GM12878 (cell line): ENCODE measurements at regions of chr11 and their contacts with region 1.

Region 1: GRCh38 chr11:120335908-120336640 is at the start of gene ARHGEF12:
- DNase-seq: peak; percentile 33
- ATAC-seq: peak; percentile 64
- H3K4me3 ChIP-seq: peak within 1 kb of the TSS; percentile 94
- H3K27ac ChIP-seq: peak within 1 kb of the TSS; percentile 74
- H3K4me1 ChIP-seq: peaks cover 9% of the 10 kb centered on the region
- H3K27me3 ChIP-seq: no peaks in the 10 kb centered on the region
- CTCF ChIP-seq: peak; percentile 40 to 48 (median 44)
- EP300 ChIP-seq: peak in 1 of 2 experiments; percentile 43; a peak in 1 of 4 replicates
- POLR2A ChIP-seq: peak; percentile 67
- RAD21 ChIP-seq: peak; percentile 23; the same call in 1 of the 2 replicates
- polyA plus RNA-seq, gene ARHGEF12: 2.7 to 3.6 TPM

Region 2: DNA sequence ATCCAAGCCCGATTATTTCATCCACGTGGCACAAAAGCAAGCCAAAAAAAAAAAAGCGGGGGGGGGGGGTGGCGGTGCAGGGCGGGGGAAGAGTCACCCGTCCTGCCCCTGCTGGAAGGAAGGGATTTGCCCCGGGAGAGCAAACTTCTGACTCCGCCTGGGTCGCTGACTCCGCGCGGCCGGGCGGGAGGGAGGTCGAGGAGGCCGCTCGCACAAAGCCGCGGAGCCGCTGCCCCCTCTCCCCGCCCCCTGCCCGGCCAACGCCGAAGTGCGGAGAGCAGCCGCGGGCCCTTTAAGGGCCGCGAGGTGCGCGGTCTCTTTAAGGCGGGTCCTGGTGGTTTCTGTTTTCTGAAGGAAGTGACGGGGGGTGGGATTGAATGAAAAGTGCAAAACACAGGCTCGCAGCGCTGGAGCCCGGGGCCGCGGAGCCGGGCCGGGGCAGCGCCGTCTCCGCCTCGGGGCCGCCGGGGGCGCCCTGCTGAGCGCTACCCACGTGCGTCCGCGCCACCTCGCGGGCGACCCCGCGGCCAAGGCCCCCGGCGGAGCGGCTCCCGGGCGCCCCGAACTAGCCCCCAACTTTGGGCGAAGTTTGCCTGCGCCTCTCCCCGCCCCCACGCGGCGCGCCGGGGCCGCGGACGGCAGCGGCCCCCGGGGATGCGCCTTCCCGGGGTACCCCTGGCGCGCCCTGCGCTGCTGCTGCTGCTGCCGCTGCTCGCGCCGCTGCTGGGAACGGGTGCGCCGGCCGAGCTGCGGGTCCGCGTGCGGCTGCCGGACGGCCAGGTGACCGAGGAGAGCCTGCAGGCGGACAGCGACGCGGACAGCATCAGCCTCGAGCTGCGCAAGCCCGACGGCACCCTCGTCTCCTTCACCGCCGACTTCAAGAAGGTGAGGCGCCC is 125.2 kb before region 1 on chr11 and contains the start of gene OAF:
- CTCF ChIA-PET with region 1: no interaction called
- POLR2A ChIA-PET with region 1: no interaction called
- RAD21 ChIA-PET with region 1: no interaction called
- SMC1A ChIA-PET with region 1: no interaction called
- in situ Hi-C with region 1: no loop called
- intact Hi-C with region 1: no loop called
- DNase-seq: no peak
- ATAC-seq: peak; percentile 92
- H3K4me3 ChIP-seq: peak within 1 kb of the TSS; percentile 74
- H3K27ac ChIP-seq: no peak within 1 kb of the TSS; the same call in 1 of the 2 replicates
- H3K4me1 ChIP-seq: peaks cover 11% of the 10 kb centered on the region
- H3K27me3 ChIP-seq: peaks cover 0 to 1% of the 10 kb centered on the region in 2 experiments; a peak in 2 of 4 replicates
- CTCF ChIP-seq: peak in 1 of 3 experiments; percentile 28; a peak in 2 of 6 replicates
- EP300 ChIP-seq: no peak
- POLR2A ChIP-seq: no peak
- RAD21 ChIP-seq: no peak
- polyA plus RNA-seq, gene OAF: 0.10 to 0.22 TPM

Region 3: GRCh38 chr11:120400564-120401364 is 64.7 kb after region 1 on chr11:
- CTCF ChIA-PET with region 1: interaction called, 15 read pairs
- POLR2A ChIA-PET with region 1: interaction called, 9 read pairs
- RAD21 ChIA-PET with region 1: interaction called, 34 read pairs
- SMC1A ChIA-PET with region 1: interaction called, 37 read pairs
- in situ Hi-C with region 1: no loop called
- intact Hi-C with region 1: loop called (anchors 2 kb)
- DNase-seq: peak; percentile 51
- ATAC-seq: peak; percentile 88
- H3K4me3 ChIP-seq: peak overlapping the region; percentile 10; the same call in 1 of the 2 replicates
- H3K27ac ChIP-seq: peak overlapping the region; percentile 48
- H3K4me1 ChIP-seq: peaks cover 8% of the 10 kb centered on the region
- H3K27me3 ChIP-seq: no peaks in the 10 kb centered on the region
- CTCF ChIP-seq: no peak
- EP300 ChIP-seq: peak in 1 of 2 experiments; percentile 34; a peak in 2 of 4 replicates
- POLR2A ChIP-seq: no peak
- RAD21 ChIP-seq: no peak

Region 4: DNA sequence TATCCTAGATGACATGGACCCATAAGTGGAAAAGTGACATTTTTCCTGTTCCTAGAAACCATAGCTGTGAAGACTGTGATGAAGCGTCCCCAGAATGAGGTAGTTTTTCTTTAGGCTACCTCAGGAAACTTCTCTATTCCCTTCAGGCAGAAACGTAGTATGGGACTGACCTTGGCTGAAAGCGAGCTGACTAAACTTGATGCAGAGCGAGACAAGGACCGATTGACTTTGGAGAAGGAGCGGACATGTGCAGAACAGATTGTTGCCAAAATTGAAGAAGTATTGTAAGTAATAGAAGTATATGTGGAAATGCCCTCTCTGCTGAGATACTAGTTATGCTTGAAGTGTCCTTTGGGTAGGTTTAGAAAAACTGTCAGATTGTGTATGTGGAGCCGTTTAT is 110.7 kb after region 1 on chr11:
- CTCF ChIA-PET with region 1: interaction called, 7 read pairs
- POLR2A ChIA-PET with region 1: no interaction called
- RAD21 ChIA-PET with region 1: no interaction called
- SMC1A ChIA-PET with region 1: interaction called, 32 read pairs
- in situ Hi-C with region 1: no loop called
- intact Hi-C with region 1: no loop called
- DNase-seq: no peak
- ATAC-seq: no peak
- H3K4me3 ChIP-seq: no peak overlapping the region
- H3K27ac ChIP-seq: no peak overlapping the region
- H3K4me1 ChIP-seq: no peaks in the 10 kb centered on the region
- H3K27me3 ChIP-seq: no peaks in the 10 kb centered on the region
- CTCF ChIP-seq: no peak
- EP300 ChIP-seq: no peak
- POLR2A ChIP-seq: no peak
- RAD21 ChIP-seq: no peak

Region 5: DNA sequence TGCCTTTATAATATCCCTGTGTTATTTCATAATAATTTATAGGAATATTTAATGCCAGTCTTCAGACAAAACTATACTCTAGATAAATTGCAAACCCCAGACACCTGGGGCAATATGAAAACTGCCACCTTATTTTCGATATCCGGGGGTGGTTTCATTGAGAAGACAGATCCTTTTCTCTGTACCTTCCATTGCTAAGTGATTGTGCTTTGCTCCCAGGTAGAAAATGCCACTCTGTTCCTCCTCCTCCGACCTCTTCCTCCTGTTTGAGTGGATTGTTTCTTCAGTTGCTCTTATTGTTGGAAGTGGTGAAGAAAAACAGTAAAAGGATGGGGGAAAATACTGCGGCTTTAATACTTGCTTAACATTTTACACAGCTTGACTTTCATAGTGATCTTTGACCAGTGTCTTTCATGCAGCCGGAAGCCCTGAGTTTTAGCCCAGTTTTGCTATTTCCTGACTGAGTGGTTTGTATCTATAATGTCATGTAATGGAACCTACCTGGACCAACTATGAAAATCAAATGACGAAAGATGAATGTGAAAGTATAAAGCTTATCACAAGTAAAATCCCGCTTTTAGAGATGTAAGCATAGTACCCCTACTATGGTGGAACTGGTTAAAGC is 169.8 kb after region 1 on chr11:
- CTCF ChIA-PET with region 1: interaction called, 40 read pairs
- POLR2A ChIA-PET with region 1: no interaction called
- RAD21 ChIA-PET with region 1: interaction called, 8 read pairs
- SMC1A ChIA-PET with region 1: interaction called, 20 read pairs
- in situ Hi-C with region 1: no loop called
- intact Hi-C with region 1: loop called (anchors 5 kb)
- DNase-seq: no peak
- ATAC-seq: no peak
- H3K4me3 ChIP-seq: no peak overlapping the region
- H3K27ac ChIP-seq: no peak overlapping the region
- H3K4me1 ChIP-seq: peaks cover 7% of the 10 kb centered on the region
- H3K27me3 ChIP-seq: no peaks in the 10 kb centered on the region; a peak in 1 of 4 replicates
- CTCF ChIP-seq: no peak
- EP300 ChIP-seq: no peak
- POLR2A ChIP-seq: no peak
- RAD21 ChIP-seq: no peak

Region 6: DNA sequence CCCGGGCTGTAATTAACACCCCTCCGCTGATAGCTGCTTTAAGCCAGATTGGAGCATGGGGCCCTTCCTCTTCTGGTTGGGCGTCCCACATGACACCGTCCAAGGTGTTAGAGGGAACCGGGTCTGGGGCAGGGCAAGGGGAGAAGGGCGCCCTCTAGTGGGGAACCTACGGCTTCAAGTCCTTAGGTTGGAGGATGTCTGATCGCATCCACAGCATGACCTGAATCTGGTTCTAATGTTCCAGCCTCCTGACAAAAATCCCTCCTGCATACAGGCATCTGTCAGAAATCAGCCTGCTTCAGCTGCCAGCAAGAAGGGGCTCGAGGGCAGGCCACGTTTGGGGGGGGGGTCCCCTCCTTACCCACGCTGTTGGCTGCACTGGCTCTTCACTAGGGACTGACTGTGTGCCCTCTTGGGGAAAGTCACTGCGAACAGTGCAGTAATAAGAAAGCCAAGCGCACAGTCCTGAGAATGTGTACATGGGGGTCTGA is 593.6 kb after region 1 on chr11:
- CTCF ChIA-PET with region 1: no interaction called
- POLR2A ChIA-PET with region 1: no interaction called
- RAD21 ChIA-PET with region 1: interaction called, 3 read pairs
- SMC1A ChIA-PET with region 1: interaction called, 6 read pairs
- in situ Hi-C with region 1: no loop called
- intact Hi-C with region 1: loop called (anchors 10 kb)
- DNase-seq: no peak
- ATAC-seq: peak; percentile 83
- H3K4me3 ChIP-seq: no peak overlapping the region
- H3K27ac ChIP-seq: no peak overlapping the region
- H3K4me1 ChIP-seq: peaks cover 18% of the 10 kb centered on the region
- H3K27me3 ChIP-seq: no peaks in the 10 kb centered on the region
- CTCF ChIP-seq: peak; percentile 72 to 89 (median 81)
- EP300 ChIP-seq: no peak
- POLR2A ChIP-seq: no peak
- RAD21 ChIP-seq: peak; percentile 58